A673 (cell line): ENCODE measurements at regions of chr4 and their contacts with region 1.

Region 1: GRCh38 chr4:159725571-159725970 is 622.7 kb downstream of the RAPGEF2 start:
- DNase-seq: no peak
- H3K4me3 ChIP-seq: no peak overlapping the region
- H3K27ac ChIP-seq: no peak overlapping the region
- H3K4me1 ChIP-seq: peaks cover 9% of the 10 kb centered on the region
- H3K27me3 ChIP-seq: no peaks in the 10 kb centered on the region
- CTCF ChIP-seq: no peak

Region 2: GRCh38 chr4:158182736-158183135 is 1542.8 kb before region 1 on chr4:
- CTCF ChIA-PET with region 1: no interaction called
- POLR2A ChIA-PET with region 1: no interaction called
- intact Hi-C with region 1: loop called (anchors 1 kb)
- DNase-seq: no peak
- H3K4me3 ChIP-seq: no peak overlapping the region
- H3K27ac ChIP-seq: no peak overlapping the region
- H3K4me1 ChIP-seq: no peaks in the 10 kb centered on the region
- H3K27me3 ChIP-seq: no peaks in the 10 kb centered on the region
- CTCF ChIP-seq: no peak

Region 3: DNA sequence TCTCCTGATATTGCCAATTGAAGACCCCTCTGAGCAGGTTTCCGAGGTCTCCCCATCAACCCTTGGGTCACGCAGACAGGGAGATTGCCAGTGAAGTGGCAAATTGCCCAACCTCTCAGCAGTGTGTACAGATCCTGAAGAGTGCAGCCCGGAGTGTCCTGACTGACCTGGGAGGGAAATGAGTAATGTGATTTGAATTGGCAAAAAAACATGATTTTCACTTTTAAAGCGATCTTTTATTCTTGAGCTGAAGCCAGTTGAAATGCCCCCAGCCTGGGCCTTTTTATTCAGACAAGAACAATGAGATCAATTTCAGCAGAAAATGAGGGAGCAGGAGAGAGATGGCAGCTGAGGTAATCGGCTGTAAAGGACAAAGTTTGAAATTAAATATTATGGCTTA is 220.9 kb before region 1 on chr4:
- CTCF ChIA-PET with region 1: no interaction called
- POLR2A ChIA-PET with region 1: no interaction called
- intact Hi-C with region 1: no loop called
- DNase-seq: peak; percentile 45
- H3K4me3 ChIP-seq: no peak overlapping the region
- H3K27ac ChIP-seq: no peak overlapping the region
- H3K4me1 ChIP-seq: peaks cover 25% of the 10 kb centered on the region
- H3K27me3 ChIP-seq: no peaks in the 10 kb centered on the region
- CTCF ChIP-seq: no peak